Calu3 (cell line): ENCODE measurements at regions of chr10 and their contacts with region 1.

Region 1: GRCh38 chr10:74081192-74081803 is 69.3 kb downstream of the AP3M1 start:
- DNase-seq: peak; percentile 69
- H3K4me3 Mint-ChIP-seq: no peak overlapping the region
- H3K27ac Mint-ChIP-seq: peak overlapping the region; percentile 95
- H3K4me1 Mint-ChIP-seq: peaks cover 58% of the 10 kb centered on the region
- H3K27me3 Mint-ChIP-seq: no peaks in the 10 kb centered on the region
- CTCF ChIP-seq: peak; percentile 72

Region 2: DNA sequence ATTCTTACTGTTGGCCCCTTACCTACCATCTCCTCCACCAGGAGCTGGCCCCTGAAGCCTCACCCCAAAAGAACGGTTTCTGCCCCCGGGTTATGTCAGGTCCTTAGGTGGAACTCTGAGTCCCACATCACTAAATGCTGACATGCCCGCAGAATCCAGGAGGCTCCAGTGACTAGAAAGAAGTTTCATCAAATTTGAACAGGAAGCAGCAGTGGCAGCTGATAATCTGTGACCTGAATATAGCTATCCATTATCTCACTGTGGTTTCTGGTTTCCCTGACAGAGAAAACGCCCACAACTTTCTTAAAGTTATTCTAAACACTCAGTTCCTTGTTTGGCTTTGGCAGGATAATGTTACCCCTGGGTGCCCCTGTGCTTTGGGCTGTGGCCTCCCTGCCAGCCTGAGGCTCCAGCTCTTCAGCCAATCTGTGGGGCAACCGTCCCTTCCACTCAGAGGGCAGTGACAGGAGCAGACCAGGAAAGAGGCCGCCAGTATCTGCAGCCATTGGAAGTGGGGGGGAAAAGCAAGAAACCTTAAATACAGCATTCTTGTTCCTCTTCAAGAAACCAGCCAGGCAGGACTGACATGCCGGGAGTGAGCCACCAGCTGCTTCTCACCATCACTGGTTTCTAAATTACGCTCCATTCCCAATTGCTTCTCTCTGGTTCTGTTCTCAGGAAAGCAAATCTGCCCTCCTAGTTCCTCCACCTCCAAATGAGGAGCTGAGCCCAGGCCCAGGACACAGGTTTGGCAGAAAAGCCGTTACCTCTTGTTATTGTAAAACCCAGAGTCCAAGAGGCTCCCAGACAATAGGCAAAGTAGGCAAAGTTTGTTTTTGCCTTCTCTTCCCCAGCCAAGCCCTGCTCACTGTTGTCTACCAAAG is 124.6 kb before region 1 on chr10:
- CTCF ChIA-PET with region 1: interaction called, 13 read pairs
- intact Hi-C with region 1: loop called (anchors 1 kb)
- DNase-seq: peak; percentile 77
- H3K4me3 Mint-ChIP-seq: peak overlapping the region; percentile 23
- H3K27ac Mint-ChIP-seq: peak overlapping the region; percentile 48
- H3K4me1 Mint-ChIP-seq: peaks cover 39% of the 10 kb centered on the region
- H3K27me3 Mint-ChIP-seq: no peaks in the 10 kb centered on the region
- CTCF ChIP-seq: no peak

Region 3: DNA sequence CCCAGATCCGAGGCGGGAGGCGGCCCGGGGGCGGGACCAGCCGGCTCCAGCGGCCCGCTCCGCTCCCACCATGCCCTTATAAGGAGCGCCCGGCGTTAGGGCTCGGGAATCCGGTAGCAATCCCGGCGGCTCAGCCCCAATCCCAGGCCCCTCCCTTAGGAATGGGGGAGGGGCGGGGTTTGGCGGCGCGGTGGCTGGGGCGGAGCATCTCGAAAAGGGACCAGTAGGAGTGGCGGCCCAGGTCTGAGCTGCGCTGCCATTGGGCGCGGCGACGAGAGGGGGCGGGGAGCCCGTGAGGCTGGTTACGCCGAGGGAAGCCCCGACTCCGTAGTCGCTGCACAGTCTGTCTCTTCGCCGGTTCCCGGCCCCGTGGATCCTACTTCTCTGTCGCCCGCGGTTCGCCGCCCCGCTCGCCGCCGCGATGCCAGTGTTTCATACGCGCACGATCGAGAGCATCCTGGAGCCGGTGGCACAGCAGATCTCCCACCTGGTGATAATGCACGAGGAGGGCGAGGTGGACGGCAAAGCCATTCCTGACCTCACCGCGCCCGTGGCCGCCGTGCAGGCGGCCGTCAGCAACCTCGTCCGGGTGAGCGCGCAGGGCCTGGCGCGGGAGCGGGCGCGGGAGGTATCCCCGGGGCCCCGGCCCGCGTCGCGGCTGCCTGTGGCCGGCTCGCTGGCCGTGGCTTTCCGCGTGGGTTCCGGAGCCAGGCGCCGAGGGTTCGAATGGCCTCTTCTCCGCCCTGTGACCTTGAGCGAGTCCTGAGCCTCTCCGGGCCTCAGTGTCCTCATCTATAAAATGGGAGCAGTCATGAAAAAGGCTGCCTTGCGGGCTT is 83.3 kb before region 1 on chr10 and contains the start of gene VCL:
- CTCF ChIA-PET with region 1: interaction called, 5 read pairs
- intact Hi-C with region 1: loop called (anchors 2 kb)
- DNase-seq: peak; percentile 100
- H3K4me3 Mint-ChIP-seq: peak within 1 kb of the TSS; percentile 97
- H3K27ac Mint-ChIP-seq: peak within 1 kb of the TSS; percentile 98
- H3K4me1 Mint-ChIP-seq: peaks cover 49% of the 10 kb centered on the region
- H3K27me3 Mint-ChIP-seq: no peaks in the 10 kb centered on the region
- CTCF ChIP-seq: no peak
- total RNA-seq, gene VCL: 234 and 237 TPM in 2 replicates

Region 4: DNA sequence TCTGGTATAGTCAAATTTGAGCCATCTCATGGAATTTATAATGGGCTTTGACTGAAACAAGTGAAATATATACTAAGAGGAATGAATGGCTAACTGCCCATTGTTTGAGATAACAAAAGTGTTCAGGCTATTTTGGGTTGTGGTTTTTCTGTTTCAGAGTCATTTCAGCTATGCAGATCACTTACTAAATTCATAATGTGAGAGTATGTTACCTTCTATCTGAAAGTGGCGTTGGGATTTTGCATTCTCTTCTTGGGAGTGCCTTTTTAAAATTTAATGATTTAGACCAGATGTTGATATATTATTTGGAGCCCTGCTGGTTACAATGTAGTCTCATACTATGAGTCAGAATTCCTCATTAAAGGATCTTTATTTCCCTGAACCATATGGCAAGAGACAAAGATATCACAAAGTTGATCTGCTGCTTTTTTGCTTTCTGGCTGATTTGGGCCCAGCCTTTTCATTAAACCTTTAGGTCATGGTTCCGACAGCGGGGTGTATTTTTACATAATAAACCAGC is 73.0 kb before region 1 on chr10:
- CTCF ChIA-PET with region 1: interaction called, 3 read pairs
- intact Hi-C with region 1: loop called (anchors 2 kb)
- DNase-seq: no peak
- H3K4me3 Mint-ChIP-seq: no peak overlapping the region
- H3K27ac Mint-ChIP-seq: no peak overlapping the region
- H3K4me1 Mint-ChIP-seq: peaks cover 53% of the 10 kb centered on the region
- H3K27me3 Mint-ChIP-seq: no peaks in the 10 kb centered on the region
- CTCF ChIP-seq: no peak

Region 5: DNA sequence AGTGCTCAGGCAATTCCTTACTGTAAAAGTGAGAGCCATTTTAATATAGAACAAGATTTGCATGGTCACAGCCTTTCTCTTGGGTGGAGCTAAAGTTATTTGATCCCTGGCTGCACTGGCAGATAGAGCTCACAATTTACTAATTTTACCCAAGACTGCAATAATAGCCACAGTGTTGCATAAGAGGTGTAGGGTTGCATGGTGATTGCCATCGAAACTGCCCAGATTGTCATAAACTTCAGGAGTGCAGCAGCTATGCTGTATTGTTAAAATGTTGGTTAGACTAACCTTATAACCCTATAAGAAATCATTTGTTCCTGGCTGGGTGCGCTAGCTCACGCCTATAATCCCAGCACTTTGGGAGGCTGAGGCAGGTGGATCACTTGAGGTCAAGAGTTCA is 33.4 kb before region 1 on chr10:
- CTCF ChIA-PET with region 1: interaction called, 10 read pairs
- intact Hi-C with region 1: no loop called
- DNase-seq: peak; percentile 57
- H3K4me3 Mint-ChIP-seq: no peak overlapping the region
- H3K27ac Mint-ChIP-seq: peak overlapping the region; percentile 78
- H3K4me1 Mint-ChIP-seq: peaks cover 62% of the 10 kb centered on the region
- H3K27me3 Mint-ChIP-seq: no peaks in the 10 kb centered on the region
- CTCF ChIP-seq: no peak

Region 6: DNA sequence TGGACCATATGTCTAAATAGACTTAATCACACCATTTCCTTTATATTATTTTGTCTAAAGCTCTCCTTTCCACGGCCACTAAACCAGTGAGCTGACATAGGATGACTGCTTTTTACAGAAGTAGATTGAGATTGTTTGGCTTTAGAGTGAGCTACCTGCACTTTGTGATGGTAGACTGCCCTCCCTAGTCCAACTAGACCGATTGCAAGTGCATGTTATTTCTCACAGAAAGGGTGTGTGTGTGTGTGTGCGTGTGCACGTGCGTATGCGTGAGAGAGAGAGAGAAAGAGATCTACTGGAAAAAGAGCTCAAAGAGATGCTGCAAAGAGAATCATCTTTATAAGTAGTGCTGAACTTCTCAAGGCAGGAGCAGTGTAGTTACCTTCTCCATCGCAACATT is 22.6 kb before region 1 on chr10:
- CTCF ChIA-PET with region 1: interaction called, 12 read pairs
- intact Hi-C with region 1: loop called (anchors 1 kb)
- DNase-seq: peak; percentile 46
- H3K4me3 Mint-ChIP-seq: peak overlapping the region; percentile 19
- H3K27ac Mint-ChIP-seq: peak overlapping the region; percentile 94
- H3K4me1 Mint-ChIP-seq: peaks cover 62% of the 10 kb centered on the region
- H3K27me3 Mint-ChIP-seq: no peaks in the 10 kb centered on the region
- CTCF ChIP-seq: no peak